ENCODE measurements at regions of chr2 and their contacts with region 1.

Region 1: GRCh38 chr2:197804049-197804757 is at the start of gene PLCL1:
- DNase-seq: peak; percentile 97
- total RNA-seq, gene PLCL1: 82.5 TPM

Region 2: GRCh38 chr2:197675711-197676188 is 128.5 kb before region 1 on chr2:
- intact Hi-C with region 1: no loop called
- DNase-seq: no peak

Region 3: DNA sequence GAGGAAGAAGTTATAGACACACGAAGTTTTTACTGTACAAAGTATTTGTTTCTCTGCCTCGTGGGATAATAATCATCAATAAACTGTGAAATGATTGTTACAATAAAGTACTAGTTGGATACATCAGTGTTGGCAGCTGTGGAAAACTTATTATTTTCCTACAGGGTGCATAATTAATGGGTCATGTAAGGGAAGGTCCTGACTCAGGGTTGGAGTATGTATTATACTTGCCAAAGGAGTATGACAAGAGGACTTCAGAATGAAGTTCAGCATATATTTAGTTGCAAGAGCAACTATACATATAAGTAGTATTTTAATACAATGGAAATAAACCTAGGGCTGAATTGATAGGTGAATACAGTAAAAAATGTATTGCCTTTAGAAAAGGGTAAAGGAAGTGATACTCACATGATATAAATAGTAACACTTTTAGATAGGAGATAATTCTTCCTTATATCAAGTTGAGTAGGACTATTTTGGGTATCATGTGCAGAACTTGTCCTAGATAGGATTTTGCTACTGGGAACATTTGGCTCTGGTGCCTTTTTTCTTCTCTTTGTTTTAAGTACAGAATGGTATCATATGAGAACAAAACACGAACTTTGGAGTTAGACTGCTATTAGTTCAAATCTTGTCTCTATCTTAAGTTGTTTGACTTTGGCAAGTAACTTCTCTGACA is 79.3 kb after region 1 on chr2:
- intact Hi-C with region 1: loop called (anchors 5 kb)
- DNase-seq: no peak

Region 4: GRCh38 chr2:197952540-197953202 is 148.5 kb after region 1 on chr2:
- intact Hi-C with region 1: loop called (anchors 2 kb)
- DNase-seq: no peak

Region 5: DNA sequence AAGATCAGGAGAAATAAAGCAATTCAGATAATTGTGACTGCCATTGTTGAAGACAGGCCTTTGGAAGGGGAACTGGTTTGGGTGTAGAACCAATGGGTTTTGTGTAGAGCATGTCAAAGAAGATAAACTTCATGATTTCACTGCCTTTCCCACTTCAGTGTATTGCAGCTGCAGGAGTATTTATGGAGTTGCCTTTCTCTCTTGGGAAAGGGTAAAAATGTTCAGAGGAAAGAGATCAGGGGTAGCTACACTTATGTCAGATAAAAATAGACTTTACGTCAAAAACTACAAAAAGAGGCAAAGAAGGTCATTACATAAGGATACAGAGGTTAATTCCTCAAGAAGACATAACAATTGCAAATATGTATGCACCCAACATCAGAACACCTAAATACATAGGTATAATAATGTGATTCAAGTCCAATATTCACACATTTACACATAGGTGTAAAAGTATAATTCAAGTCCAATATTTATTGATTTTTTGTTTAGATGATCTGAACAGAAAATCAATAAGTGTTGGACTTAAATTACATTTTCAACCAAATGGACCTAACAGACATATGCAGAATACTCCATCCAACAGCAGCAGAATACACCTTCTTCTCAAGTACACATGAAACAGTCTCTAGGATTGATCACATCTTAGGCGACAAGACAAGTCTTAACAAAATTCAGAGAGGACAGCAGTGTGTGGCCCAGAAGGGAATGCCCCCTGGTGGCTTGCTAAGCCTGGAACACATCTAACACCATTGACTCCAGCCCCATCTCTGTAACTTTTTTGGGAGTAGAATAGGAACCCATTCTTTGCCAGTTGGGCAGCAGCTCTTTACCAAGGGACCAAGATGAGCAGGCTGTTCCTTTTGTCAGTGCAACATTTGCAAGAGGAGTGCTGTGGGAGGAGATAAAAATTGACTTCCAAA is 249.8 kb after region 1 on chr2:
- intact Hi-C with region 1: loop called (anchors 2 kb)
- DNase-seq: no peak

Region 6: DNA sequence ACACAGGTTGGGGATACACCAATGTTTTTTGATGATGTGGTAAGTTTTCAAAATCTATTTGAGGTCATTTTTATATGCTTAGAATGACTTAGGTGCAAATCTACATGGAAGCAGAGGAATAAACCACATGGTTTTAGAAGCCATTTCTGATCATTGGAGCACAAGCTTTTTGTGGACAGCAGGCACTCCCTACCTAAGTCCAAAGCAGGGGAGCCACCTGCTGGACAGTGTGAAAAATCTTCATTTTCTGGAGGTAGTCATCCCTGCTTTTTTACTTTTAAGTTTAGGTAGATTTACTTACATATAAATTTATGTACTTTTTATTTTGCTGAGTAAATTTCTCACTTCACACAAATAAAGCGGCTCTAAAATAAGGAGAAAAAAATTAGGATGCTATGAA is 323.4 kb after region 1 on chr2:
- intact Hi-C with region 1: loop called (anchors 2 kb)
- DNase-seq: peak; percentile 78

Region 7: DNA sequence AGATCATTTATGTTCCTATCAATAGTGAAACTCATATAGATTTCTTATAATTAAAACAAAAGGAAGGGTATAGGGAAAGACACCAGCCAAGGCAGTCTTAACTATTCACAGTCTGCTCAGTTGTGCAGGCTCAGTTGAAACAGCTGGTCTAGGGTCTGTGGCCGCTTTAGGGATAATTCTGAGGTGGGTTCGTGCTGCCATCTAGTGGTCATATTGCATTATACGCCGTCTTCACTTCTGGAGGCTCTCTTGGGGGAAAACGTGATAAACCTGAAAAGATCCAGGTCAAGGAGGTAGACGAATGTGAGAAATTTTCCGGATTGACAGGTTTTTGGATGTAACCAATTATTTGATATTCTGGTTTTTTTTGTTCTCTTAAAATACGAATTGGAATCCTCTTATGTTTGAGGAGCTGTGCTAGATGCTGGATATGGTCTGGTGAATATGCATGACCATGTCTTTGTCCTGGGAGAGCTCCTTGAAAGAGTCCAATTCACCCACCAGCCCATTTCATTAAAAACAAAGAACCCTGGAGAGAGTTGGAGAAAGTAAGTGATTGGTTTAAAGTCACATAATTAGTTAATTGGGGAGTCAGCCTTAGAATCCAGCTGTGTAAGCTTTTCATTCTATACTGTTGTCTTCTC is 492.6 kb after region 1 on chr2:
- intact Hi-C with region 1: loop called (anchors 2 kb)
- DNase-seq: no peak

Measured in cardiac septum (tissue), 1 donor.